ENCODE measurements at regions of chr10 and their contacts with region 1.

Region 1: GRCh38 chr10:62816331-62817120 is at the start of gene EGR2:
- DNase-seq: peak; percentile 84 to 98 (median 90)

Region 2: GRCh38 chr10:62443866-62444265 is 372.7 kb before region 1 on chr10:
- intact Hi-C with region 1: loop called (anchors 5 kb)
- DNase-seq: no peak

Region 3: DNA sequence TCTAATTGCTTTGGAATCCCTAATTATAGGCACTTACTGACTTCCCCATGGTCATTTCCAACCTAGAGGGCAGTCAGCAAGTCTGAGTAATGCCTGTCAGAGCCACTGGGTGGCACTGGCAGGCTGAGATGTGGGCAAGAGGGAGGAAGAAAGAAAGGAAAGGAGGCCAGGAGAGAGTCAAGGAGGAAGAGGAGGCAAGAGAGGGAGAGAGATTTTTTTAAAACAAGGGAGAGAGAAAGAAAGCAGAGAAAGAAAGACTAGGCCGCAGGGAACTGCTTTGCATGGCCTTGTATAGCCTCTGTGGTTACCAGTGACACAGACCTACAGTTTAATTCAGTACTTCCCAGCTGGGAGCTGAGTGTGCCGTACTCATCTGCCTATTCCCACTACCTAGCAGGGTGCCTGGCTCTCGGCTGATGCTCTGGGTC is 222.4 kb before region 1 on chr10:
- intact Hi-C with region 1: loop called (anchors 5 kb)
- DNase-seq: peak in 8 of 10 donors; percentile 53 to 94 (median 62)

Region 4: GRCh38 chr10:62610649-62611229 is 205.8 kb before region 1 on chr10:
- intact Hi-C with region 1: loop called (anchors 2 kb)
- DNase-seq: peak in 9 of 10 donors; percentile 27 to 90 (median 44)

Region 5: GRCh38 chr10:62666275-62666674 is 150.3 kb before region 1 on chr10:
- intact Hi-C with region 1: loop called (anchors 10 kb)
- DNase-seq: no peak

Region 6: DNA sequence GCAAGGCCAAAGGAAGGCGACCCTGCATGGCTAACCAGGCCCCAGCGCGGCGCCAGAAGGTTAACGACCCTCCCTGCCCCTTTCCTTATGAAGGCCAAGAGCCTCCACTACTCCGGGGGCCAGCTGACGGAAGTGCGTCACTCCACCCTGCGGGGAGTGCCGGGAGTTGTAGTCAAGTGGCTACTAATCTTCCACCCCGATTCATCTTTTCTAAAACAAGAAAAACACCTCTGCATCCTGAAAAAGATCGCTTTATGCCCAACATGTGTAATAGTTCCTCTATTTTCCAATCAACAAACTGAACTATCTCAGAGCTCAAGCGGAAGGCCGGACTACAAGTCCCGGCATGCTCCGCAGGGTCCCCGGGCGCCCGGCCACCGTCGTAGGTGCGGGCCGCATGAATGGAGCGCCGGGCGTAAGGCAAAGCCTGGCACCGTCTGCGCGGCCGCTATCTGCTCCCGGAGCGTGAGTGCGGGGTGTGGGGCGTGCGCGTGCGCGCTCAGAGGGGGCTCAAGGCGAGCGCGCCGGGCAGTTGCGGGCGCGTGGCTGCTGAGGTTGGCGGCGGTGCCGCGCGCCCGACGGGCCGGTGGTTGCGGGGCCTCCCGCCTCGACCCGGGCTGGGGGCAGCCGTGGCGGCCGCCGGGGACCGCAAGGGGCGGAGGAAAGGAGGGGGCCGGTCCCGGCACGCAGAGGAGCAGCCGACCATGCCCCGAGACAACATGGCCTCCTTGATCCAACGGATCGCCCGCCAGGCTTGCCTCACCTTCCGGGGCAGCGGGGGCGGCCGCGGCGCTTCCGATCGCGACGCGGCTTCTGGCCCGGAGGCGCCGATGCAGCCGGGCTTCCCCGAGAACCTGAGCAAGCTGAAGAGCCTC is 11.9 kb before region 1 on chr10 and contains the start of gene ADO:
- intact Hi-C with region 1: loop called (anchors 1 kb)
- DNase-seq: peak; percentile 84 to 99 (median 92)

Region 7: DNA sequence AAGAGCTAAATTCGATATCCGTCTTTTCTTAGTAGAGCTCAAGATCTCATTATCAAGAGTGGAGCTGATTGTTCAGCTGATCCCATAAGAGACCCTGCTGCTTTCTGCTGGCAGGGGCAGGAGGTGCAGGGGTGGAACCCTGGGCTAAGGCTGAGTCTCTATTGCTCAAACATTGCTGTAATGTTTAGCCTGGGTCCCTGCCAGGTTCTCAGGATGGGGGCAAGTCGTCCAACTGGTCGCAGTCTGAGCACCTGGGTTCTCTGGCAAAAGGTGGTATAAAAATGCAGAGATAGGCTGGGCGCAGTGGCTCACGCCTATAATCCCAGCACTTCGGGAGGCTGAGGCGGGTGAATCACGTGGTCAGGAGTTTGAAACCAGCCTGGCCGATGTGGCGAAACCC is 254.6 kb after region 1 on chr10:
- intact Hi-C with region 1: no loop called
- DNase-seq: no peak

Region 8: DNA sequence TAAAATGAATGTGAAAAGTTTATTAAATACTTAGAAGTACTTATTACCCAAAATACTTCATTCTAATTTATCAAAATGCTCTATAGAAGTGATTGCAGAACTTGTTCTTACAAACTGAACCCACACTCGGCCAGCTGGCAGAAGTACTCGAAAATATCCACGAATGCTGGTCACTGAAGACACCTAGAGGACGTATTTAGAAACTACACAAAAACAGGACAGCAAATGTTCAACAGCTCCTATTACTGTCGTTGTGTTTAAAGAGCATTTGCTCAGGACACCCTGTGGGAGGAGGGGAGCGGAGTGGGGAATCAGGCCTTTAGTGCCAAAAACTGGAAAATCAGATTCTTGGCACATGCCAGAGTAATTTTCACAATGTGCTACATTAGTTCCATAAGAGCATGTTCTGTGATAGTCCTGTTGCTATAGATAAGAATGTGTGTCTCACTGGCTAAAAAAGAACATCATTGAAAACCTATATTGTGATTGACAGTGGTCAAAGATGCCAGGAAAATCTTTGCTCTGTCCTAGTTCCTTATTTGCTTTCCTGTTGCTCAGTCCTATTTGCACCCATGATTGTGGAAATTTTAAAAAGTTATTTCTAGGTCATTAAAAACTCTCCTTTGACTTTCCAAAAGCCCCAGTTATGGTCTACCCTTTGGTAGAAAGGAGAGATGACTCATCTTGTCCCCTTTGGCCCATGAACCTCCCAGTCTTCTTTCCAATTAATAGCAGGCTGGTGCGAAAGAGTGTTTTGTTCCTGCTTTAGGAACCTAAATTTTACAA is 267.6 kb after region 1 on chr10:
- intact Hi-C with region 1: loop called (anchors 10 kb)
- DNase-seq: peak in 6 of 10 donors; percentile 21 to 91 (median 41)